ENCODE measurements at regions of chr12 and their contacts with region 1.

Region 1: GRCh38 chr12:8078398-8078797 is 3.7 kb upstream of the NECAP1 start:
- DNase-seq: peak; percentile 43 to 84 (median 67)
- H3K4me3 ChIP-seq: no peak overlapping the region
- H3K4me3 Mint-ChIP-seq: peak overlapping the region in 2 of 7 donors; percentile 28 to 77
- H3K27ac ChIP-seq: no peak overlapping the region
- H3K27ac Mint-ChIP-seq: peak overlapping the region; percentile 76 to 100 (median 88)
- H3K4me1 ChIP-seq: peaks cover 33% of the 10 kb centered on the region
- H3K4me1 Mint-ChIP-seq: peaks cover 43 to 59% (median 49%) of the 10 kb centered on the region in 3 donors
- H3K27me3 ChIP-seq: no peaks in the 10 kb centered on the region
- H3K27me3 Mint-ChIP-seq: peaks cover 0 to 3% of the 10 kb centered on the region in 2 donors

Region 2: GRCh38 chr12:7959701-7960121 is 118.7 kb before region 1 on chr12:
- CTCF ChIA-PET with region 1: interaction called, 13 read pairs
- POLR2A ChIA-PET with region 1: no interaction called
- DNase-seq: peak; percentile 29 to 62 (median 56)
- H3K4me3 ChIP-seq: peak overlapping the region; percentile 54
- H3K4me3 Mint-ChIP-seq: peak overlapping the region; percentile 85 to 94 (median 93)
- H3K27ac ChIP-seq: peak overlapping the region; percentile 43
- H3K27ac Mint-ChIP-seq: peak overlapping the region; percentile 74 to 99 (median 96)
- H3K4me1 ChIP-seq: peaks cover 26% of the 10 kb centered on the region
- H3K4me1 Mint-ChIP-seq: peaks cover 31 to 45% (median 38%) of the 10 kb centered on the region in 3 donors
- H3K27me3 ChIP-seq: no peaks in the 10 kb centered on the region
- H3K27me3 Mint-ChIP-seq: no peaks in the 10 kb centered on the region

Region 3: GRCh38 chr12:8032242-8033152 is 45.9 kb before region 1 on chr12 and contains the start of gene FOXJ2:
- CTCF ChIA-PET with region 1: interaction called, 20 read pairs
- POLR2A ChIA-PET with region 1: interaction called, 15 read pairs
- DNase-seq: peak; percentile 74 to 85 (median 78)
- H3K4me3 ChIP-seq: peak within 1 kb of the TSS; percentile 82
- H3K4me3 Mint-ChIP-seq: peak within 1 kb of the TSS; percentile 88 to 94 (median 91)
- H3K27ac ChIP-seq: peak within 1 kb of the TSS; percentile 84
- H3K27ac Mint-ChIP-seq: peak within 1 kb of the TSS; percentile 86 to 98 (median 94)
- H3K4me1 ChIP-seq: peaks cover 58% of the 10 kb centered on the region
- H3K4me1 Mint-ChIP-seq: peaks cover 56 to 60% (median 57%) of the 10 kb centered on the region in 3 donors
- H3K27me3 ChIP-seq: no peaks in the 10 kb centered on the region
- H3K27me3 Mint-ChIP-seq: no peaks in the 10 kb centered on the region
- total RNA-seq, gene FOXJ2: 22.3 to 22.5 TPM

Region 4: GRCh38 chr12:8045952-8046944 is 32.1 kb before region 1 on chr12:
- CTCF ChIA-PET with region 1: interaction called, 130 read pairs
- POLR2A ChIA-PET with region 1: interaction called, 9 read pairs
- DNase-seq: peak; percentile 68 to 84 (median 74)
- H3K4me3 ChIP-seq: no peak overlapping the region
- H3K4me3 Mint-ChIP-seq: no peak overlapping the region
- H3K27ac ChIP-seq: no peak overlapping the region
- H3K27ac Mint-ChIP-seq: peak overlapping the region in 7 of 8 donors; percentile 1 to 70 (median 44)
- H3K4me1 ChIP-seq: no peaks in the 10 kb centered on the region
- H3K4me1 Mint-ChIP-seq: peaks cover 7 to 11% (median 8%) of the 10 kb centered on the region in 3 donors
- H3K27me3 ChIP-seq: no peaks in the 10 kb centered on the region
- H3K27me3 Mint-ChIP-seq: no peaks in the 10 kb centered on the region

Region 5: GRCh38 chr12:8099235-8099634 is 20.8 kb after region 1 on chr12:
- CTCF ChIA-PET with region 1: no interaction called
- POLR2A ChIA-PET with region 1: no interaction called
- DNase-seq: no peak
- H3K4me3 ChIP-seq: no peak overlapping the region
- H3K4me3 Mint-ChIP-seq: no peak overlapping the region
- H3K27ac ChIP-seq: no peak overlapping the region
- H3K27ac Mint-ChIP-seq: peak overlapping the region in 1 of 8 donors; percentile 54
- H3K4me1 ChIP-seq: no peaks in the 10 kb centered on the region
- H3K4me1 Mint-ChIP-seq: peaks cover 8 to 29% (median 14%) of the 10 kb centered on the region in 3 donors
- H3K27me3 ChIP-seq: no peaks in the 10 kb centered on the region
- H3K27me3 Mint-ChIP-seq: no peaks in the 10 kb centered on the region

Region 6: GRCh38 chr12:8123124-8123912 is 44.9 kb after region 1 on chr12 and contains the start of gene CLEC4A:
- CTCF ChIA-PET with region 1: no interaction called
- POLR2A ChIA-PET with region 1: no interaction called
- DNase-seq: no peak
- H3K4me3 ChIP-seq: no peak within 1 kb of the TSS
- H3K4me3 Mint-ChIP-seq: no peak within 1 kb of the TSS
- H3K27ac ChIP-seq: no peak within 1 kb of the TSS
- H3K27ac Mint-ChIP-seq: peak within 1 kb of the TSS in 1 of 8 donors; percentile 7
- H3K4me1 ChIP-seq: peaks cover 7% of the 10 kb centered on the region
- H3K4me1 Mint-ChIP-seq: peaks cover 0 to 5% (median 0%) of the 10 kb centered on the region in 3 donors
- H3K27me3 ChIP-seq: no peaks in the 10 kb centered on the region
- H3K27me3 Mint-ChIP-seq: no peaks in the 10 kb centered on the region
- total RNA-seq, gene CLEC4A: 0.42 to 1.1 TPM

Region 7: DNA sequence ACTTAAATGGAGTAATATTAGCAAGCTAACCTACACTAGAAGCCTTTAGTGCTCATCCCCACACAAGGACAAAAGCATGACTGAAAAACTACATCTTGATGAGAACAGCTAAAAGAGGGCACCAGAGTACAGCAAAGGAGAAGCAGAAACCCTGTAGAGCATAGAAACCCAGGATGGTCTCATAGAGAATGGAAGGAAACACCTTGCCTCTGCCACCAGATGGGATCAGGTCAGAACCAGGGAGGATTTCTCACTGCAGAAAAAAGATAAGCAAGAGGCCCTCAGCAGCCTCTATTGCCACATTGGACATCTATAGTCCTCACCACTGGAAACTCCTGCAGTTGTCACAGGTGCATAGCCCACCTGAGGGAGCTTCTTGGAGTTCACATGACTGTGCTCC is 64.9 kb after region 1 on chr12:
- CTCF ChIA-PET with region 1: no interaction called
- POLR2A ChIA-PET with region 1: no interaction called
- DNase-seq: no peak
- H3K4me3 ChIP-seq: no peak overlapping the region
- H3K4me3 Mint-ChIP-seq: no peak overlapping the region
- H3K27ac ChIP-seq: no peak overlapping the region
- H3K27ac Mint-ChIP-seq: peak overlapping the region in 1 of 8 donors; percentile 8
- H3K4me1 ChIP-seq: no peaks in the 10 kb centered on the region
- H3K4me1 Mint-ChIP-seq: no peaks in the 10 kb centered on the region
- H3K27me3 ChIP-seq: no peaks in the 10 kb centered on the region
- H3K27me3 Mint-ChIP-seq: peaks cover 0 to 23% of the 10 kb centered on the region in 2 donors

Region 8: DNA sequence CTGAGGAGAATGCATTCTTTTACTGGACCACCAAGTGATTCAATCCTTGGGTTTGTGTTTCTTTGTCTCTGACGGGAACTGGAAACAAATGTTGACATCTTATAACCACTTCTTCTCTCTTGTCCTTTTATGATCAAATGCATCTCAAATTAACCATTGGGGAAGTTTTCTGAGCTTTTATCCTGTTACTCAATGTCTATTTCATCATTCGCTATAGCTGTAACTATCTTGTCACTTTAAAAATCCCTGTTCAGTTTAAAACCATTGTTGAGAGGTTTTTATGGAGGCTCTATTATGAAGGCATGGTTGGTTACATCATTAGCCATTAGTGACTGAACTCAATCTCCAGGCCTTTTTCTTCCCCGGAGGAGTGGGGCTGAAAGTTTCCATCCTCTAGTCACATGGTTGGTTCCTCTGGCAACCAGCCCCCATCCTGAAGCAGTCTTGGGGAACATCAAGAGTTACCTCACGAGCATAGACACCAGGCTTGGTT is 374.7 kb after region 1 on chr12:
- CTCF ChIA-PET with region 1: no interaction called
- POLR2A ChIA-PET with region 1: no interaction called
- DNase-seq: no peak
- H3K4me3 ChIP-seq: no peak overlapping the region
- H3K4me3 Mint-ChIP-seq: no peak overlapping the region
- H3K27ac ChIP-seq: no peak overlapping the region
- H3K27ac Mint-ChIP-seq: no peak overlapping the region
- H3K4me1 ChIP-seq: no peaks in the 10 kb centered on the region
- H3K4me1 Mint-ChIP-seq: no peaks in the 10 kb centered on the region
- H3K27me3 ChIP-seq: no peaks in the 10 kb centered on the region
- H3K27me3 Mint-ChIP-seq: peaks cover 0 to 29% of the 10 kb centered on the region in 2 donors